ENCODE measurements at regions of chr1 and their contacts with region 1.

Region 1: GRCh38 chr1:8015036-8015808 is 10.9 kb downstream of the ERRFI1 start:
- DNase-seq: no peak
- H3K4me3 ChIP-seq: peak overlapping the region; percentile 36
- H3K27ac ChIP-seq: peak overlapping the region; percentile 72
- H3K4me1 ChIP-seq: peaks cover 55% of the 10 kb centered on the region
- H3K27me3 ChIP-seq: no peaks in the 10 kb centered on the region
- CTCF ChIP-seq: peak; percentile 77

Region 2: GRCh38 chr1:7454895-7455784 is 560.1 kb before region 1 on chr1:
- intact Hi-C with region 1: no loop called
- DNase-seq: no peak
- H3K4me3 ChIP-seq: no peak overlapping the region
- H3K27ac ChIP-seq: no peak overlapping the region
- H3K4me1 ChIP-seq: peaks cover 9% of the 10 kb centered on the region
- H3K27me3 ChIP-seq: no peaks in the 10 kb centered on the region
- CTCF ChIP-seq: no peak

Region 3: DNA sequence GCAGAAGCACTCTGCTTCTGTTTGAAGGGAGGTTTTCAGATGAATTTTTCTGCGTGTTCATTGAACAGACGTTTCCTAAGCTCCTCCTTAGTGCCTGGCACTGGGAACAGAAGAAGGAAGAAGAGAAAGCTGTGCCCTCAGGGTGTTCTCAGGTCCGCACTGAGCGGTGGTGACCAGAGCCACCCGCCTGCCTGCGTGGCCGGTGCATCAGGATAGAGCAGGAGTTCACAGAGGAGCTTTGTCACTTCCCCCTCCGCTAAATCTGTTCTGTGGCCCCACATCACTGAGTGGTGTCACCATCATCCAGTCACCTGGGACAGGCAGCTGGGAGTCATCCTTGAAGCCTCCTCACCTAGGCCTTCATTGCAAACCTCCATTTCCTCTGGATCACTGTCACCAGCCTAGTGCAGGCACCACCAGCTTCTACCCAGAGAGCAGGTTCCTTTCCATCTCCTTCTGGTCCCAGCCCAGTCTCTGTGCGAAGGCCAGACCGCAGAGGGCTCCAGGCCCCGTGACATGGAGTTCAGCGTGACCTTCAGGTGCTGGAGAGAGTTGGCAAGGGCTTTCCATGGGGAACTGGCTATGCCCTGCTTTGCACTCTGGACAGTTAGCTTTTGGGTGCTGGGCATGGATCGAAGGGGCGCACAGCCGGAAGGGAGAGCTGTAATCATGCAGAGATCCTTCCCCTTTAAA is 32.0 kb before region 1 on chr1:
- intact Hi-C with region 1: loop called (anchors 5 kb)
- DNase-seq: no peak
- H3K4me3 ChIP-seq: no peak overlapping the region
- H3K27ac ChIP-seq: peak overlapping the region; percentile 17
- H3K4me1 ChIP-seq: peaks cover 21% of the 10 kb centered on the region
- H3K27me3 ChIP-seq: no peaks in the 10 kb centered on the region
- CTCF ChIP-seq: no peak

Region 4: DNA sequence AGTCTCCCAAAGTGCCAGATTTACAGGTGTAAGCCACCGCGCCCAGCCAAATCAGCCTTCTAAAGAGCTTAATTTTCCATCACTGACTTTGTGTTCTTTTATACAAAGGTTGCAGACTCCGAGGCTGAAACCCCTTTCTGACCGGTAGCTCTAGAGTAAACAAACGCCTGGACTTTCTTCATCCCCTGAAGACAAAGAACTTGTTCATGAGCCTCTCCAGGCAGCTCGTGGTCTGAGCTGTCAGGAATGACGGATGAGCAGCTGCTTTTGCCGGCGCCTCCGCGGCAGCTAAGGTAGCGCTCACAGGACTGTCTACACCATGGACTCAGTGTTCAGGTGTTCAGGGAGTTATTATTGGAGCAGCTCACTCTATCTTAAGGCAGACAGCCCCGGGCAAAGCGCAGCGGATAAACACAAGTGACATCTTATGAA is 139.4 kb after region 1 on chr1:
- intact Hi-C with region 1: no loop called
- DNase-seq: no peak
- H3K4me3 ChIP-seq: no peak overlapping the region
- H3K27ac ChIP-seq: no peak overlapping the region
- H3K4me1 ChIP-seq: no peaks in the 10 kb centered on the region
- H3K27me3 ChIP-seq: peaks cover 20% of the 10 kb centered on the region
- CTCF ChIP-seq: no peak

Measured in left ventricle myocardium inferior (tissue), 1 donor.